ENCODE measurements at regions of chr13 and their contacts with region 1.

Region 1: DNA sequence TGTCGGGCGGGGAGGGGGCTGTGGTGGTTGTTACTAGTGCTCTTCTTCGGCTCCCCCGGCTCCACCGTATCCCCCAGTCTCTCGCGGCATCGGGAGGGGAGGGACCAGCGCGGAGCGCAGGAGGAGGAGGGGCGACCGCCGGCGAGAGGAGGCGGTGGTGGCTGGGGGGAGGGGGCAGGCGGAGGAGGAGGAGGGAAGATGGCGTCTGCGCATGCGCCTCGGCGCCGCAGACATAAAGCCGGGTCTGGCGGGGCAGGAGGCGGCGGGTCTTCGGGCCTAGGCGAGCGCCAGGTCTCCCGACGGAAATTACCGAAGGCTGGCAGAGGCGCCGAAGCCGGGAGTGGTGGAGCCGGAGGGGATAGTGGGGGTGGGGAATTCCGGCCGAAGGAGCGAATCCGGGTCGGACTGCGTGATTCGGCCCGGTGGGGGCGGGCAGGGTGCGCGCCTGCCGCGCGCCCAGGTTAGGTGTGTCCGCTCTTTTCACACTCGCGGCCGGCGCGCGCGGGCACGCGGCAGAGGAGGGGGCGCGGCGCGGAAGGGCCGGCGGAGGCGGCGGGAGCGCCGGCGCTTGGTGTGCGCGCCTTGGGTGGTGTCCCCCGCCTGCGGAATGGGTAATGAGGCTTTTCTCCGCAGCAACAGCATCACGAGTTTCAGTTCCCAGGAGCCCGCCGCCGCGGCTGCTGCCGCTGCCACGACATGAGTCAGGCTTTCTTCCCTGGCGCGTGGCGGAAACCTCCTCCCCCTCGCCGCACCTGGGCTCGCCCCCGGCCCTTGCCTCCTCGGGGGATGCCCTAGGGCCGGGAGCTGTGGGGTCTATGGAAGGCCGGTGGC is 1.3 kb upstream of the TSC22D1 start:
- DNase-seq: peak; percentile 96 to 97
- ATAC-seq: peak; percentile 64 to 68
- H3K4me3 ChIP-seq: peak overlapping the region; percentile 85 to 98 (median 97)
- H3K27ac ChIP-seq: peak overlapping the region; percentile 97 to 100 (median 99)
- H3K4me1 ChIP-seq: peaks cover 17 to 27% of the 10 kb centered on the region in 2 donors
- H3K27me3 ChIP-seq: no peaks in the 10 kb centered on the region
- CTCF ChIP-seq: peak in 2 of 5 experiments; percentile 11 to 38
- POLR2A ChIP-seq: peak; percentile 91 to 92

Region 2: GRCh38 chr13:44088991-44089413 is 488.4 kb before region 1 on chr13:
- in situ Hi-C with region 1: no loop called
- intact Hi-C with region 1: no loop called
- DNase-seq: no peak
- ATAC-seq: no peak
- H3K4me3 ChIP-seq: no peak overlapping the region
- H3K27ac ChIP-seq: no peak overlapping the region
- H3K4me1 ChIP-seq: no peaks in the 10 kb centered on the region
- H3K27me3 ChIP-seq: no peaks in the 10 kb centered on the region
- CTCF ChIP-seq: no peak
- POLR2A ChIP-seq: no peak

Region 3: GRCh38 chr13:44104197-44104490 is 473.3 kb before region 1 on chr13:
- in situ Hi-C with region 1: no loop called
- intact Hi-C with region 1: no loop called
- DNase-seq: no peak
- ATAC-seq: no peak
- H3K4me3 ChIP-seq: no peak overlapping the region
- H3K27ac ChIP-seq: no peak overlapping the region
- H3K4me1 ChIP-seq: peaks cover 12 to 23% of the 10 kb centered on the region in 2 donors
- H3K27me3 ChIP-seq: no peaks in the 10 kb centered on the region
- CTCF ChIP-seq: no peak
- POLR2A ChIP-seq: no peak

Region 4: GRCh38 chr13:44155422-44156293 is 421.8 kb before region 1 on chr13:
- in situ Hi-C with region 1: no loop called
- intact Hi-C with region 1: loop called (anchors 10 kb)
- DNase-seq: peak; percentile 43 to 75
- ATAC-seq: peak in 1 of 2 donors; percentile 28
- H3K4me3 ChIP-seq: peak overlapping the region; percentile 19 to 38 (median 32)
- H3K27ac ChIP-seq: peak overlapping the region; percentile 86 to 94 (median 92)
- H3K4me1 ChIP-seq: peaks cover 71 to 80% of the 10 kb centered on the region in 2 donors
- H3K27me3 ChIP-seq: no peaks in the 10 kb centered on the region
- CTCF ChIP-seq: peak in 1 of 5 experiments; percentile 13
- POLR2A ChIP-seq: no peak

Region 5: DNA sequence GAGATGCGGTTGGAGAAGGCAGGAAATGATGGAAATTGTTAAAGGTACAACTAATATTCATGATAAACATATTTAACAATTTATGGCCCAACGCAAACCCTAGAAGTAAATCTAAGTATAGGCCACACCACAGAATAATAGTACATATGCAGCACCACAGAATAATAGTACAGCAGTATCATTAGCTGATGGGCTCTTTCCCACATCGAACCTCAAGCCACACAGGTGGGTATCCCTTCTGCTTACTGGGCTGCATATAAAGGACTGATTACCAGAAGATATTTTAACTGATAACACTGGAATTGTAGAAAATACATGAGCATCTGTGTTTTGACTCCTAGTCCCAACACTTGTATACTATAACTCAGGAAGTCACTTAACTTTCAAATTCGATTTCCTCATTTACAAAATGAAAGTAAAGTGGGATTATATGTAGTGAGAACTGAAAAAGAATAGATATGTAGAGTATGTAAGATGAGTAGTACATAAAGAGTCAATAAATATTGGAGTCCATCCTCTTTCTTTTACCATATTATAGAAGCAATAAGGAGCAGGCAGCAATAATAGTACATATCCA is 92.8 kb before region 1 on chr13:
- in situ Hi-C with region 1: no loop called
- intact Hi-C with region 1: loop called (anchors 2 kb)
- DNase-seq: no peak
- ATAC-seq: peak in 1 of 2 donors; percentile 17
- H3K4me3 ChIP-seq: no peak overlapping the region
- H3K27ac ChIP-seq: peak overlapping the region; percentile 35 to 58 (median 52)
- H3K4me1 ChIP-seq: peaks cover 46 to 48% of the 10 kb centered on the region in 2 donors
- H3K27me3 ChIP-seq: no peaks in the 10 kb centered on the region
- CTCF ChIP-seq: no peak
- POLR2A ChIP-seq: no peak

Region 6: GRCh38 chr13:44537248-44537647 is 40.2 kb before region 1 on chr13:
- in situ Hi-C with region 1: no loop called
- intact Hi-C with region 1: no loop called
- DNase-seq: no peak
- ATAC-seq: no peak
- H3K4me3 ChIP-seq: no peak overlapping the region
- H3K27ac ChIP-seq: peak overlapping the region in 2 of 4 donors; percentile 29 to 73
- H3K4me1 ChIP-seq: peaks cover 32 to 35% of the 10 kb centered on the region in 2 donors
- H3K27me3 ChIP-seq: no peaks in the 10 kb centered on the region
- CTCF ChIP-seq: no peak
- POLR2A ChIP-seq: no peak

Region 7: GRCh38 chr13:44620057-44620456 is 42.6 kb after region 1 on chr13:
- in situ Hi-C with region 1: no loop called
- intact Hi-C with region 1: no loop called
- DNase-seq: no peak
- ATAC-seq: no peak
- H3K4me3 ChIP-seq: no peak overlapping the region
- H3K27ac ChIP-seq: no peak overlapping the region
- H3K4me1 ChIP-seq: no peaks in the 10 kb centered on the region
- H3K27me3 ChIP-seq: no peaks in the 10 kb centered on the region
- CTCF ChIP-seq: no peak
- POLR2A ChIP-seq: no peak

Region 8: DNA sequence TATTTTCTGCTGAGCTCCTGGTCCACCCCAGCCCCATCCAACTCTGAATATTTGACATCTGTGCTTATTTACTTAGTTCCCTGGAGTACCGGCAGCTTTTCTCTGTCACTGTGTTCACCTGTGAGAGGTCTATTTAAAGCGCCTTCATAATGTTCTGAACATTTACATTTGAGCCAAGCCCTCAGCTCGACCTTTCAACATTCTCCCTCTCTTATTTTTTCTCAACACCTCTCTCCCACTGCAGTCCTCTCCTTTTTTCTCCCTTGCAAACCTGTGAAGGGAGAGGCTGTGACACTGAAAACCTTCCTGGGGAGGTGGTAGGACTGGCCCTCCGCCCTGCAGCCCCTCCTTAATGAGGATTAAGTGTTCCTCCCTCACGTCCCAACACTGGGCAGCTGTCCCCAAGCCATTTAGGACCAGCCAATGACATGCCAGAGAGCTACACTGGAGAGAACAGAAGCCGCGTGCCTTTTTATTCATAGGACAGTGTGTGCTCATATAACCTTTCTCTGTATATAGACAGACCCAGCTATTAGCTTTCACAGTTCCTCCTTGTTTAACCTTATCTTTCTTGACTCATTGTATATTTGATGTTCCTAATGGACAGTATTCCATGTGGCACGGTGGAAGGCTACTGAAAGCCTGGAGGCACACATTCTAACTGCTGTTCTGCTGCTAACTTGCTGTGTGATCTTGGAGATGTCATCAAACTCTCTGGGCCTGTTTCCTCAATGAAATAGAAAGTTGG is 277.0 kb after region 1 on chr13:
- in situ Hi-C with region 1: no loop called
- intact Hi-C with region 1: loop called (anchors 1 kb)
- DNase-seq: peak; percentile 96 to 99
- ATAC-seq: peak; percentile 88 to 92
- H3K4me3 ChIP-seq: peak overlapping the region in 2 of 4 donors; percentile 9 to 21
- H3K27ac ChIP-seq: peak overlapping the region; percentile 88 to 95 (median 93)
- H3K4me1 ChIP-seq: peaks cover 34 to 38% of the 10 kb centered on the region in 2 donors
- H3K27me3 ChIP-seq: no peaks in the 10 kb centered on the region
- CTCF ChIP-seq: no peak
- POLR2A ChIP-seq: peak; percentile 46 to 61

Region 9: DNA sequence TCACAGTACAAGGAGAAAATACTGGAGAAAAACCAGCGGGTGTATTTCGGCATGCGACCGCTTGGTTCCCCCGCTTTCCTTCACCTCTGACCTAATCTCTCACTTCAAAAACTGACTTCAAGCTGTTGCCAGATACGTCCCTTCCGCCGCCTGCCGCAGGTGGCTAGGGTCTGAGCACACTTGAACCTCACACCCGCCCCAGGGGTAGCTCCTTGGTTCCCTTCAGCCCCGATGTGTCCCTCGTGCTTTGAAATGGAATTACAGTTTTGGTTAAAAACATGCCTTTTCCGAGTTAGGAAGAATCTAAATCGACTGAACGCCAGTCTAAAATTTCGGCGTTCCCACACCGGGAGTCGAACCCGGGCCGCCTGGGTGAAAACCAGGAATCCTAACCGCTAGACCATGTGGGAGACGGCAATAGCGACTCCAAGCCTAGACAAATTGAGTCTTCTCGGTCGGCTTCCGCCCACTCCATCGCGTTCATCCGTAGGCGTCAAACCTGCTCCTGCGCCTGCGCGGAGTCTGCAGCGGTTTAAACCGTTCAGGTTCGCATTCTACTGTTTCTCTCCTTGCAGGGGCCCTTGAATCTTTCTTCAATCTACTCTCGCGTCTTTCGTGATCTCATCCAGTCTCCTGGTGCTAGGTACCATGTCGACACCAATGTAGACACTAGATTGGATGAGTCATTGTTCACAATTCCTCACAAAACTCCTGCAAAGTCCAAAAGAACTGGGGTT is 340.3 kb after region 1 on chr13:
- in situ Hi-C with region 1: no loop called
- intact Hi-C with region 1: loop called (anchors 1 kb)
- DNase-seq: peak; percentile 91 to 95
- ATAC-seq: peak; percentile 63 to 65
- H3K4me3 ChIP-seq: peak overlapping the region; percentile 50 to 59 (median 58)
- H3K27ac ChIP-seq: peak overlapping the region; percentile 90 to 98 (median 95)
- H3K4me1 ChIP-seq: peaks cover 27 to 36% of the 10 kb centered on the region in 2 donors
- H3K27me3 ChIP-seq: no peaks in the 10 kb centered on the region
- CTCF ChIP-seq: peak; percentile 45 to 71 (median 59)
- POLR2A ChIP-seq: peak; percentile 70 to 83

Measured in gastrocnemius medialis (tissue), 4 donors.